GM10248 (cell line): ENCODE measurements at regions of chr3 and their contacts with region 1.

Region 1: GRCh38 chr3:85567071-85567676 is 608.4 kb downstream of the CADM2 start:
- DNase-seq: peak; percentile 20
- CTCF ChIP-seq: peak; percentile 58

Region 2: GRCh38 chr3:85554153-85554552 is 13.0 kb before region 1 on chr3:
- CTCF ChIA-PET with region 1: interaction called, 53 read pairs
- POLR2A ChIA-PET with region 1: no interaction called
- DNase-seq: no peak
- CTCF ChIP-seq: no peak

Region 3: GRCh38 chr3:85790445-85791030 is 223.4 kb after region 1 on chr3:
- CTCF ChIA-PET with region 1: no interaction called
- POLR2A ChIA-PET with region 1: no interaction called
- DNase-seq: no peak
- CTCF ChIP-seq: no peak

Region 4: GRCh38 chr3:86990734-86991481 is 1423.7 kb after region 1 on chr3 and contains the start of gene VGLL3:
- CTCF ChIA-PET with region 1: no interaction called
- POLR2A ChIA-PET with region 1: no interaction called
- DNase-seq: peak; percentile 15
- CTCF ChIP-seq: no peak